ENCODE measurements at regions of chr10 and their contacts with region 1.

Region 1: GRCh38 chr10:119028900-119029612 is 458 bp upstream of the NANOS1 start:
- DNase-seq: peak; percentile 74 to 86
- ATAC-seq: peak; percentile 51 to 57
- H3K4me3 ChIP-seq: peak overlapping the region; percentile 56 to 63 (median 58)
- H3K27ac ChIP-seq: peak overlapping the region; percentile 76 to 92 (median 80)
- H3K4me1 ChIP-seq: peaks cover 35 to 39% of the 10 kb centered on the region in 2 donors
- H3K27me3 ChIP-seq: no peaks in the 10 kb centered on the region
- CTCF ChIP-seq: peak in 3 of 5 experiments; percentile 35 to 58 (median 36)
- POLR2A ChIP-seq: peak; percentile 60

Region 2: GRCh38 chr10:117375360-117376178 is 1653.5 kb before region 1 on chr10 and contains the start of gene PDZD8:
- in situ Hi-C with region 1: no loop called
- intact Hi-C with region 1: loop called (anchors 10 kb)
- DNase-seq: peak; percentile 87 to 89
- ATAC-seq: peak; percentile 90 to 91
- H3K4me3 ChIP-seq: peak within 1 kb of the TSS; percentile 84 to 96 (median 95)
- H3K27ac ChIP-seq: peak within 1 kb of the TSS; percentile 87 to 94 (median 92)
- H3K4me1 ChIP-seq: peaks cover 29 to 31% of the 10 kb centered on the region in 2 donors
- H3K27me3 ChIP-seq: peaks cover 0 to 2% (median 0%) of the 10 kb centered on the region in 3 donors
- CTCF ChIP-seq: peak in 1 of 5 experiments; percentile 12
- POLR2A ChIP-seq: peak; percentile 90 to 94
- total RNA-seq, gene PDZD8: 15.9 to 25.0 (median 18.1) TPM

Region 3: DNA sequence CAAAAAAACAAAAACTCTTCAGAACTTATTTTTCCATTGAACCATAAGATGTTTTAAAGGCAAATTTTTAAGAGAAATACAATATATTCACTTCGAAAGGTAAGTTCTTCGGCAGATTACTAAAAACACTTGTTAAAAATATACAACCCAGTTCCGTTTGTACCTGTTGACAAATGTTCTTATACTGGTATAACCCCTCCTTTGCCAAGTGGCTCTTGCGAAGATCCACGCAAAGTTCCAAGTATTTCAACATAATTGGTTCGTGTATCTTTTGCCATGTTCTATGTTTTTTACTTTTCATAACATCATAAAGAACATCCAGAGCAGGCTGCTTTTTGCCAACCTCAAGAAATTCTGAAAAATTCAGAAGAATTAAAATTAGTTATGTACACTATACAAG is 44.5 kb after region 1 on chr10:
- in situ Hi-C with region 1: no loop called
- intact Hi-C with region 1: loop called (anchors 2 kb)
- DNase-seq: no peak
- ATAC-seq: peak; percentile 79 to 83
- H3K4me3 ChIP-seq: peak overlapping the region in 2 of 4 donors; percentile 26 to 34
- H3K27ac ChIP-seq: peak overlapping the region; percentile 63 to 81 (median 68)
- H3K4me1 ChIP-seq: peaks cover 32 to 42% of the 10 kb centered on the region in 2 donors
- H3K27me3 ChIP-seq: no peaks in the 10 kb centered on the region
- CTCF ChIP-seq: no peak
- POLR2A ChIP-seq: no peak

Region 4: DNA sequence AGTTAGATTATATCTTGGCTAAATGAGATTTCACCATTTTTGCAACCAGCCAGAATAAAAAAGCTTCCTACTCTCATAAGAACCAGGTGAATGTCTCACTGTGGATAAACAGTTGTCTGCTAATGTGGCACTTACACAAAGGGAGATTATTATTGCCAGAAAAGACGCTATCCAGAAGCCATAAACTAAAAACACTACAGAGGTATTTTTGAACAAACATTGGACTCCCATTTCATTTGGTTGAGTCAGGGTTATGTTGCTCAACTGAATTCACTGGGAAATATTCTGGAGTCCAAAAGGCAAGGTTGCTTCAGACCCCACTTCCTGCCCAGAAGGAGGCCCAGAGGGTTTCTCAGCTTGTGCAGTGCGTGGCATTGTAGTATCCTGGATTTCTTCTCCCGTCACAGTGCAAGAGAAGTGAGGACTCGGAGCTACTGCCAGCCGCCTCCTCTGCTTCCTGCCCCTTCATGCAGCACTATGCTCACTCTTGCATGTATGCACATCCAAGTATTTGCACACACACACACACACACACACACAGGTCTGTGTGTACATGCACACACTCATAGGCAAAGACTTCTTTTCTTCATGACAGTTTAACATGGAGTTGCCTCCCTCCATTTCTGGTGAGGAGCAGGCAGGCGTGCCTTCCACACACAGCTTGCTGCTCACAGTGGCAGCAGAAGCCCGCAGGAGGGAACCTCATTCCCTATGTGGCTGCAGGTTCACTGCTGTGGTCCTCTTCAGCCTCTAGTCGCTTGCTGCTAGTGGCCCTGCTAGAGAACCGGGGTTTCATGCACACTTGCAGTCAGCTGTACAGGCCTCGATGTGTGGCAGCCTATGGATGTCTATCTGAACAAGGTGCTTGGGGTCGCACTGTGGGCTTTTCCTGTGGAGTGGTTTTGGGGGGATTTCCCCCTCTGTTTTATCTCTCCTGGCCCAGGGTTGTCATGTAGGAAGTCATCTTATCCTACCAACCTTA is 85.0 kb after region 1 on chr10:
- in situ Hi-C with region 1: no loop called
- intact Hi-C with region 1: loop called (anchors 5 kb)
- DNase-seq: peak in 1 of 2 donors; percentile 63
- ATAC-seq: peak; percentile 85 to 98
- H3K4me3 ChIP-seq: no peak overlapping the region
- H3K27ac ChIP-seq: peak overlapping the region; percentile 77 to 84 (median 78)
- H3K4me1 ChIP-seq: peaks cover 5 to 13% of the 10 kb centered on the region in 2 donors
- H3K27me3 ChIP-seq: no peaks in the 10 kb centered on the region
- CTCF ChIP-seq: no peak
- POLR2A ChIP-seq: no peak

Region 5: DNA sequence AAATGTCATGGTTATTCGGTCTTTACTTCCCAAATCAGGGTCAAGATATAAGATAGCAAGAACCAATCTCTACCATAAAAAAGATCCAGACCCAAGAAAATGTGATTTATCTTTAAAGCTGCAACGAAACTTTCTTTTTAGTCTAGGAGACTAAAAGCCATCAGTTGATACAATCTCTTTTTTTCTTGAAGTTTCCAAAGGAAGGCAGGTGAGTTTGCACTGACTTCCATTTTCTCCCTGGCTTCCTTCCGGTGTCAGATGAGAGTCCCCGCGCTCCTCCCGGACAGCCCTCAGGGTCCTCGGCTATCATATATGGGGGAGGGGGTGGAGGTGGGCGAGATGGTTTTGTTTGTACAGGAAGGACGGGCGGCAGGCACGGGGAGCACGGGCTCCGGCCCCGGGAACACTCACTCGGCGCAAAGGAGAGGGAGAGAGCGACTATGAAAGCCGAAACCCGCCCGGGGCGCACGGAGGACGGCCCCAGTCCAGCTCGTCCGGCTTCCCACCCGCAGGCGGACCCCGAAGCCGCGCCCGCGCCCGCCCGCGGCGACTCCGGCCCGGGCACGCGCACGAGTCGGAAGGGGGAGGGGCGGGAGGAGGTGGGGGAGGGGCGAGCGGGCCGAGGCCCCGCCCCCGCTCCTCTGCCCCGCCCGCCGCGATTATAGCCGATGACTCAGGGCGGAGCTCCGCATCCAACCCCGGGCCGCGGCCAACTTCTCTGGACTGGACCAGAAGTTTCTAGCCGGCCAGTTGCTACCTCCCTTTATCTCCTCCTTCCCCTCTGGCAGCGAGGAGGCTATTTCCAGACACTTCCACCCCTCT is 621.8 kb after region 1 on chr10 and contains the start of gene BAG3:
- in situ Hi-C with region 1: no loop called
- intact Hi-C with region 1: loop called (anchors 10 kb)
- DNase-seq: peak; percentile 97 to 98
- ATAC-seq: peak; percentile 81 to 83
- H3K4me3 ChIP-seq: peak within 1 kb of the TSS; percentile 80 to 85 (median 81)
- H3K27ac ChIP-seq: peak within 1 kb of the TSS; percentile 91 to 99 (median 97)
- H3K4me1 ChIP-seq: peaks cover 20 to 27% of the 10 kb centered on the region in 2 donors
- H3K27me3 ChIP-seq: no peaks in the 10 kb centered on the region
- CTCF ChIP-seq: no peak
- POLR2A ChIP-seq: no peak
- total RNA-seq, gene BAG3: 337 to 626 (median 393) TPM